B cell (primary cell): ENCODE measurements at regions of chr17 and their contacts with region 1.

Region 1: GRCh38 chr17:36601303-36602029 is at the start of gene MRM1:
- DNase-seq: peak; percentile 93
- ATAC-seq: peak; percentile 88
- H3K4me3 ChIP-seq: peak within 1 kb of the TSS; percentile 55 to 100 (median 90)
- H3K4me3 Mint-ChIP-seq: peak within 1 kb of the TSS; percentile 92
- H3K27ac ChIP-seq: peak within 1 kb of the TSS; percentile 56 to 69
- H3K27ac Mint-ChIP-seq: peak within 1 kb of the TSS; percentile 93
- H3K4me1 ChIP-seq: peaks cover 11 to 25% of the 10 kb centered on the region in 2 donors
- H3K4me1 Mint-ChIP-seq: peaks cover 40% of the 10 kb centered on the region
- H3K27me3 ChIP-seq: no peaks in the 10 kb centered on the region
- H3K27me3 Mint-ChIP-seq: no peaks in the 10 kb centered on the region
- CTCF ChIP-seq: no peak
- total RNA-seq, gene MRM1: 13.5 and 14.4 TPM in 2 replicates

Region 2: GRCh38 chr17:36534840-36535668 is 66.4 kb before region 1 on chr17 and contains the starts of genes MYO19 and PIGW:
- CTCF ChIA-PET with region 1: interaction called, 9 read pairs
- POLR2A ChIA-PET with region 1: interaction called, 9 read pairs
- intact Hi-C with region 1: loop called (anchors 1 kb)
- DNase-seq: peak; percentile 93
- ATAC-seq: peak; percentile 78
- H3K4me3 ChIP-seq: peak within 1 kb of the TSS; percentile 62 to 99 (median 94)
- H3K4me3 Mint-ChIP-seq: peak within 1 kb of the TSS; percentile 96
- H3K27ac ChIP-seq: peak within 1 kb of the TSS; percentile 96 to 97
- H3K27ac Mint-ChIP-seq: peak within 1 kb of the TSS; percentile 99
- H3K4me1 ChIP-seq: peaks cover 9 to 18% of the 10 kb centered on the region in 2 donors
- H3K4me1 Mint-ChIP-seq: peaks cover 21% of the 10 kb centered on the region
- H3K27me3 ChIP-seq: no peaks in the 10 kb centered on the region
- H3K27me3 Mint-ChIP-seq: no peaks in the 10 kb centered on the region
- CTCF ChIP-seq: no peak
- total RNA-seq, gene MYO19: 65.7 and 76.8 TPM in 2 replicates
- total RNA-seq, gene PIGW: 5.9 and 6.3 TPM in 2 replicates

Region 3: GRCh38 chr17:36583787-36584186 is 17.7 kb before region 1 on chr17:
- CTCF ChIA-PET with region 1: interaction called, 15 read pairs
- POLR2A ChIA-PET with region 1: interaction called, 8 read pairs
- intact Hi-C with region 1: no loop called
- DNase-seq: no peak
- ATAC-seq: no peak
- H3K4me3 ChIP-seq: no peak overlapping the region
- H3K4me3 Mint-ChIP-seq: no peak overlapping the region
- H3K27ac ChIP-seq: no peak overlapping the region
- H3K27ac Mint-ChIP-seq: no peak overlapping the region
- H3K4me1 ChIP-seq: no peaks in the 10 kb centered on the region
- H3K4me1 Mint-ChIP-seq: no peaks in the 10 kb centered on the region
- H3K27me3 ChIP-seq: no peaks in the 10 kb centered on the region
- H3K27me3 Mint-ChIP-seq: no peaks in the 10 kb centered on the region
- CTCF ChIP-seq: no peak

Region 4: DNA sequence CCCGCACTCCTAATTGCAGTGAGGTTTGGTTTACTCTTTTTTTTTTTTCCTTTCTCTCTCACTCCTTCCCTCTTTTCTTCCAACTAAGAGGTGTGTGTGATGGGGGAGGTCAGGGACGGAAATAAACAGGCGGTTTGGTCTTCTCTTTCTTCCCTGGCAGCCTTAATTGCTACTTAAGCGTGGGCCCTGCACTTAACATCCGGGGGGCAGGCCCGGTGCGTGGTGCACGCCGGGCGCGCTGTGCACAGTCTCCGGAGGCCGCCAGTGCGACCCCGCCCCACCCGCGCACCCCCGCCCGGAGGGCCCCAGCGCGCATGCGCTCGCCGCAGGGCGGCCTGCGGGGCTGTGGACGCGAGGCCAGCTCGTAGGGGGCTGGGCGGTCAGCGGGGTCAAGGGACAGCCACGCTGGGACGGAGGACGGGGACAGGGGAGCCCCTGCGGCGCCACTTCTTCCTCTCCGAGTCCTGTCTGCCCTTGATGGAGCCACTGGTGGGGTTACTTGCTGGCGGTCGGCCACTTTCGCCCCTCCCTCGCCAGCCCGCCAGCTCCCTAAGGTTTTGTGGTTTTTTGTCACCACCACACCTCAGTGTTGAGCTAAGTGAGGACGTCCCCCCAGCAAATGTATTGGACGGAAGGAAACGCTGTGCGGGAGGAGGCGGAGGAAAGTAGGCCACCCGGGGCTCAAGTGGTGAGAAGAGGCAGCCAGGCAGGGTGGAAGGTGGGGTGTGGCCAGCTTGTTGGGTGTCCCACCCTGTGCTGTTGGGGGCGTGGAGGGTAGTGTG is 120.8 kb after region 1 on chr17:
- CTCF ChIA-PET with region 1: interaction called, 6 read pairs
- POLR2A ChIA-PET with region 1: no interaction called
- intact Hi-C with region 1: loop called (anchors 1 kb)
- DNase-seq: peak; percentile 81
- ATAC-seq: peak; percentile 94
- H3K4me3 ChIP-seq: peak overlapping the region in 4 of 5 experiments; percentile 58 to 80 (median 64)
- H3K4me3 Mint-ChIP-seq: peak overlapping the region; percentile 90
- H3K27ac ChIP-seq: peak overlapping the region; percentile 62 to 77
- H3K27ac Mint-ChIP-seq: peak overlapping the region; percentile 96
- H3K4me1 ChIP-seq: peaks cover 25 to 35% of the 10 kb centered on the region in 2 donors
- H3K4me1 Mint-ChIP-seq: peaks cover 55% of the 10 kb centered on the region
- H3K27me3 ChIP-seq: peaks cover 0 to 5% (median 1%) of the 10 kb centered on the region in 4 experiments
- H3K27me3 Mint-ChIP-seq: peaks cover 9% of the 10 kb centered on the region
- CTCF ChIP-seq: no peak

Region 5: DNA sequence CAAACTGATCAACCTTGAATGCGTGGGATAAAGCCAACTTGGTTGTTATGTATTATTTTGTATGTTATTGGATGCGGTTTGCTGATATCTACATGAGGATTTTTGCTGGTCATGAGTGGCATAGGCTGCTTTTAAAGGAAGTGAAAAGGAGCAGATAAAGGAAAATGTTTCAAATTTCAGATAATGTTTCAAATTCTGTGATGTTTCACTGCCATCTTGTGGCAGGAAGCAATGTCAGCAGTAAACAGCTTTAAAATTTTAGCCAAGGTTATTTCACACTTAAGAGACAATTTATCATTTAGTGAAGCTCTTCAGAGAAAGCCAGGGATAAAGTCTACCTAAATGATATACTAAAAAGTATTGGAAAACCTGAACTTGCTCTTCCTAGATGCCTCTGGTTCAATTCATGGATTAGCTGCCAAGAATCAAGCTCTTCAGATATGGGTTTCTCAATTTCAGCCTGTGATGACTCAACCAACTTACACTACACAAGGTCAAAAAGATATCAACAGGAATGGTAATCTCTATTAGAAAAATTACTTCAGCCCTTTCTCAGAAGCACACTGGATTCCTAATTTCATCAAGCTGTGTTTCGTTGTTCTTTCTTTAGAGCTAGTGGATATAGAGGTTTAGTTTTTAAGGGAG is 638.3 kb after region 1 on chr17:
- CTCF ChIA-PET with region 1: interaction called, 16 read pairs
- POLR2A ChIA-PET with region 1: no interaction called
- intact Hi-C with region 1: no loop called
- DNase-seq: peak; percentile 29
- ATAC-seq: no peak
- H3K4me3 ChIP-seq: no peak overlapping the region
- H3K4me3 Mint-ChIP-seq: no peak overlapping the region
- H3K27ac ChIP-seq: no peak overlapping the region
- H3K27ac Mint-ChIP-seq: no peak overlapping the region
- H3K4me1 ChIP-seq: no peaks in the 10 kb centered on the region
- H3K4me1 Mint-ChIP-seq: no peaks in the 10 kb centered on the region
- H3K27me3 ChIP-seq: no peaks in the 10 kb centered on the region
- H3K27me3 Mint-ChIP-seq: no peaks in the 10 kb centered on the region
- CTCF ChIP-seq: peak; percentile 71